ENCODE measurements at regions of chr2 and their contacts with region 1.

Region 1: DNA sequence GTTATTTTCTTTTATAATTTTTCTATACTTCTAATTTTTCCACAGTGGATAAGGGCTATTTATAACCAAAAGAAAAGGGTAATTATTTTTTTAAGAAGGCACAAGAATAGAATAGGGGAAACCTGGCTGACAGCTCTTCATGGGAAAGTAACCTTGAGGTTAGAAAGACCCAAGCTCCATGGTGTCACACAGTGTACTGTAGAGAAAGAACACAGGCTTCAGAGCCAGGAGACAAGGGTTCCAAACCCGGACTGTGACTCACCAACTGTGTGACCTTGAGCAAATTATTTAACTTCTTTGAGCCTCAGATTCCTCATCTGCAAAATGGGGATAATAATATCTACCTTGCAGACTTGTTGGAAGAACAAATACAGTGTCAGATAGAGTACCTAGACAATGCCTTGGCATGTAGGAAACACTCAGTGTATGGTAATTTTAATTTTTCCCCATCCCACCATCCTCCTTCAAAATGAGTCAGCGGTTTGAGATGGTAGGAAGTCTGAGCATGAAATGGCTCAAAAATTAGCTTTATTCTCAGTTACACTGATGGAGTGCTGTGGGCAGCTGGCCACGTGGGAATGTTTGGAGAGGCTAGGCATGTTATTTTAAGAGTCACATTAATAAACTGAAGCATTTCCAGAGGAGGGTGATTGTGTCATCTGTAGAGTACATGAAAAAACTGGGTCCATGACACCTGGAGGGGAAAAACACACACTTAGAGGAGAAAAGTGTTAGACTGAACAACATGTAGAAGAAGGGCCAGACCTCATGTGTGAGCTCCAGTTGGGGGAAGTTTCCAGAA is 36.7 kb downstream of the TMEM37 start:
- DNase-seq: no peak
- CTCF ChIP-seq: no peak

Region 2: DNA sequence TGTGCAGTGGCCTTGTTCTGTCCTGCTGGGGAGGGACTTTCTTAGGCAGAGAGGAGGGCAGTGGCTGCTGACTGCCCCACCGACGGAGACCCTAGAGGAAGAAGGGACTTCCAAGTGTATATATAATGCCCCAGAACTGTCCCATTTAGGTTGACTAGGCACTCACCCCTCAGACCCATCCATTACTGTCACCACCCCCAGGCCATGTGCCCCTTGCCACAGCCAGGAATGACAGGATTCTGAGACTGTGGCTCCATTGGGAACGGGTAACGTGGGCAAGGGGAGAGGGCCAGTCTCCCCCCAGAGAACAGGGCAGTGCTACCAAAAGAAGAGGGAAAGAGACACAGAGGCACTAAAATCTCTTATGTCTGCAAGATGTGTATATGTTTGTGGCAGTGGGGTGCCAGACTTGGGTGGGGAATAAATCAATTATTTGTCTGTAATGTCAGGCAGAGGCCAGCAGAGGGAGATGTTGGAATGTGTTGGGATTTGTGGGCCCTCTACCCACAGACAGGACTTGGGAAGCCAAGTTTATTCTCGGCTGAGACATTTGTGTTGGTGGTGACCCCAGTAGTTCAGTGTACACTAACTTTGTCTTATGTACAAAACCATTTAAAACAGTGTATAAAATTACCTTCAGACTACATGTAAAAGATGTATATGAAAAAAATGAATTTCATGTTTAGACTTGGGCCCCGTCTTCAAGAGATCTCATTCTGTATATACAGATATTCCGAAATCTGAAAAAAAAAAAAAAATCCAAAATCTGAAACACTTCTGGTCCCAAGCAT is 60.7 kb before region 1 on chr2:
- in situ Hi-C with region 1: loop called (anchors 5 kb)
- DNase-seq: peak; percentile 76
- CTCF ChIP-seq: peak; percentile 73

Measured in GM13976 (cell line).